Heart right ventricle (tissue), 16 donors: ENCODE measurements at regions of chr20 and their contacts with region 1.

Region 1: GRCh38 chr20:39829256-39829655 is 859.8 kb downstream of the MAFB start:
- DNase-seq: peak; percentile 11 to 18
- ATAC-seq: peak in 1 of 8 donors; percentile 61
- H3K4me3 ChIP-seq: no peak overlapping the region
- H3K27ac ChIP-seq: no peak overlapping the region
- H3K4me1 ChIP-seq: peaks cover 0 to 10% (median 0%) of the 10 kb centered on the region in 9 donors
- H3K27me3 ChIP-seq: peaks cover 0 to 4% (median 0%) of the 10 kb centered on the region in 7 donors
- CTCF ChIP-seq: peak in 7 of 9 donors; percentile 24 to 49 (median 39)

Region 2: DNA sequence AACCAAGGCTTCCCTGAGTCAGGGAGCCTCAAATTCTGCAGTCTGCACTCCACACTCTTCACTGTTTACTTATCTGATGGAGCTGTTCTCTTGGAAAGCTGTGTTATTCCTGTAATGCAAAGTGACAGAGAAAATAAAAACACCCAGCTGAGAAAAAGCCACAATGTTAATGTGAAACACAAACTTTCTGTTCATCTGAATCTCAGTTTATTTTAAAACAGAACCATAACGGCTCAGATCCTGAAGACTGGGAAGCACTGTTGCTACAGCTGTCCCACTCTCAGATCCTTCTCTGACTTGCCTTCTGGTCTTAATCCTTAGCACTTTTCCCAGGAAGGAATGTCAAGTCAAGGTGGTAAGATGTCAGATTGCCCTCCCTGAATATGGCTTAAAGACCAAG is 130.5 kb before region 1 on chr20:
- intact Hi-C with region 1: no loop called
- DNase-seq: no peak
- ATAC-seq: peak in 6 of 8 donors; percentile 27 to 52 (median 37)
- H3K4me3 ChIP-seq: no peak overlapping the region
- H3K27ac ChIP-seq: peak overlapping the region in 6 of 10 donors; percentile 34 to 73 (median 50)
- H3K4me1 ChIP-seq: peaks cover 0 to 24% (median 11%) of the 10 kb centered on the region in 9 donors
- H3K27me3 ChIP-seq: no peaks in the 10 kb centered on the region
- CTCF ChIP-seq: no peak

Region 3: DNA sequence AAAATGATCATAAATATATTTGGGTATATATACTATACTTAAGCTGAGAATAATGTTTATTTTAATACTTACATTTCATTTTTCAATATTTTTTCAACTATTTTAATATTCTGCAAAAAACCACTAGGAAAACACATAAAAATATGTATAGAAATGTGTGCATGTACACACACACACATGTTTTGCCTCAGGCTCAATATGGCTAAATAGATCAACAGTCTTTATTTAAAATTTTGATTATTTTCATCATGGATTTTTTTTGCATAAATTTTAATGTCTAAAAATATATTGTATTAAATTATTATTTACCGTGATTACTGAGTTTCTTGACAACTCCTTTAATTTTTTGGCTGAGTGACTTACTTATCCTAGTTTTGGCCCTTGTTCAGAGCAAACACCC is 20.6 kb before region 1 on chr20:
- intact Hi-C with region 1: loop called in 1 of 10 experiments (anchors 2 kb)
- DNase-seq: no peak
- ATAC-seq: no peak
- H3K4me3 ChIP-seq: no peak overlapping the region
- H3K27ac ChIP-seq: no peak overlapping the region
- H3K4me1 ChIP-seq: no peaks in the 10 kb centered on the region
- H3K27me3 ChIP-seq: no peaks in the 10 kb centered on the region
- CTCF ChIP-seq: no peak